Breast epithelium (tissue), 4 donors: ENCODE measurements at regions of chr14 and their contacts with region 1.

Region 1: GRCh38 chr14:65229751-65230749 is 127.7 kb upstream of the MAX start:
- DNase-seq: no peak
- H3K4me3 ChIP-seq: peak overlapping the region; percentile 38 to 65 (median 46)
- H3K27ac ChIP-seq: peak overlapping the region; percentile 89 to 95
- H3K4me1 ChIP-seq: peaks cover 0 to 4% of the 10 kb centered on the region in 2 donors
- H3K27me3 ChIP-seq: no peaks in the 10 kb centered on the region
- CTCF ChIP-seq: no peak
- POLR2A ChIP-seq: no peak

Region 2: GRCh38 chr14:65453807-65454480 is 223.9 kb after region 1 on chr14:
- intact Hi-C with region 1: loop called (anchors 5 kb)
- DNase-seq: no peak
- H3K4me3 ChIP-seq: no peak overlapping the region
- H3K27ac ChIP-seq: no peak overlapping the region
- H3K4me1 ChIP-seq: no peaks in the 10 kb centered on the region
- H3K27me3 ChIP-seq: no peaks in the 10 kb centered on the region
- CTCF ChIP-seq: no peak
- POLR2A ChIP-seq: no peak